Activated CD4-positive, alpha-beta T cell treated with anti-CD3 and anti-CD28 coated beads for 36 hours (primary cell): ENCODE measurements at regions of chr9 and their contacts with region 1.

Region 1: GRCh38 chr9:96854073-96854876 is at the start of gene ZNF782:
- DNase-seq: peak; percentile 92
- ATAC-seq: peak; percentile 92
- H3K4me3 Mint-ChIP-seq: peak within 1 kb of the TSS; percentile 96
- H3K27ac Mint-ChIP-seq: peak within 1 kb of the TSS; percentile 100
- H3K4me1 Mint-ChIP-seq: peaks cover 49% of the 10 kb centered on the region
- H3K27me3 Mint-ChIP-seq: peaks cover 11% of the 10 kb centered on the region
- total RNA-seq, gene ZNF782: 3.8 to 4.8 TPM

Region 2: GRCh38 chr9:96449845-96450612 is 404.2 kb before region 1 on chr9 and contains the start of gene HABP4:
- CTCF ChIA-PET with region 1: no interaction called
- POLR2A ChIA-PET with region 1: no interaction called
- intact Hi-C with region 1: loop called in 1 of 2 experiments (anchors 2 kb)
- DNase-seq: peak; percentile 98
- ATAC-seq: peak; percentile 96
- H3K4me3 Mint-ChIP-seq: peak within 1 kb of the TSS; percentile 84
- H3K27ac Mint-ChIP-seq: peak within 1 kb of the TSS; percentile 73
- H3K4me1 Mint-ChIP-seq: peaks cover 24% of the 10 kb centered on the region
- H3K27me3 Mint-ChIP-seq: peaks cover 9% of the 10 kb centered on the region
- total RNA-seq, gene HABP4: 5.8 to 7.3 TPM

Region 3: GRCh38 chr9:97062417-97062985 is 208.2 kb after region 1 on chr9:
- CTCF ChIA-PET with region 1: no interaction called
- POLR2A ChIA-PET with region 1: no interaction called
- intact Hi-C with region 1: loop called in 1 of 2 experiments (anchors 5 kb)
- DNase-seq: peak; percentile 69
- ATAC-seq: peak; percentile 88
- H3K4me3 Mint-ChIP-seq: no peak overlapping the region
- H3K27ac Mint-ChIP-seq: peak overlapping the region; percentile 42
- H3K4me1 Mint-ChIP-seq: peaks cover 13% of the 10 kb centered on the region
- H3K27me3 Mint-ChIP-seq: peaks cover 17% of the 10 kb centered on the region

Region 4: GRCh38 chr9:97096793-97097192 is 242.5 kb after region 1 on chr9:
- CTCF ChIA-PET with region 1: no interaction called
- POLR2A ChIA-PET with region 1: no interaction called
- intact Hi-C with region 1: no loop called
- DNase-seq: no peak
- ATAC-seq: no peak
- H3K4me3 Mint-ChIP-seq: no peak overlapping the region
- H3K27ac Mint-ChIP-seq: no peak overlapping the region
- H3K4me1 Mint-ChIP-seq: no peaks in the 10 kb centered on the region
- H3K27me3 Mint-ChIP-seq: peaks cover 12% of the 10 kb centered on the region

Region 5: GRCh38 chr9:97237951-97238851 is 383.9 kb after region 1 on chr9:
- CTCF ChIA-PET with region 1: interaction called, 6 read pairs
- POLR2A ChIA-PET with region 1: no interaction called
- intact Hi-C with region 1: loop called (anchors 1 to 2 kb)
- DNase-seq: peak; percentile 91
- ATAC-seq: peak; percentile 95
- H3K4me3 Mint-ChIP-seq: peak overlapping the region; percentile 93
- H3K27ac Mint-ChIP-seq: peak overlapping the region; percentile 97
- H3K4me1 Mint-ChIP-seq: peaks cover 12% of the 10 kb centered on the region
- H3K27me3 Mint-ChIP-seq: no peaks in the 10 kb centered on the region

Region 6: DNA sequence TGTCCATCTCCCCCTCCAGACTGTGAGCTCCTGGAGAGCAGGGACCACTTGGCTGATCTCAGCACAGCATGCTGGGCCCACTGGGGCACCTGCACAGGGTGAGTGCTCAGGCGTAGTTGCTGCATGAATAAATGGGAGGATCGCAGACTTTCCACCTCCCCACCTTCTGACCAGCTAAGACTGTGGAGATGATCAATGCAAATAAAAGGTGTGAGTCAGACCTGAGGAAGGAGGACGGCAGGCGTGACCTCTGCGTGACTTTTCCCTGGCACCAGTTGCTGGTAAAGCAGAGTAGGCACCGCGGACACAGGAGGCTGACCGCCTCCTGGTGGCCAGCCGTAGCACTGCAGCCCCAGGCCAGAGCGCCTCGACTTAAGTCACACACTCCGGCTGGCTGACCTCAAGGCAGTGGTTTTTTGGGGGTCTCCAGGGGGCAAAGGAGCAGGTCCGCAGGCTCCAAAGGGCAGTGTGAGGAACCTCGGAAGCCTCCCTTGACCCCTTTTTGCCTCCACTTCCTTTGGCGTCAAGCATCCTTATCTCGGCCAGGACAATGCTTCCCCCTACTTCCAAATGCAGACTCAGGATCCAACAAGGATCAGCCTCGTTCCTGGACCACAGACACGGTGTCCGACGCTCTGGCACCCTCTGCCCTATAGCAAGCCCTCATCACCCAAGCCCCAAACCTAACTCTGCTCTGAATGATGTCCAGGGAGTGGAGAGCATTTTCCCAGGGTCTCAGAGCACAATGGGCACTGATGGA is 544.9 kb after region 1 on chr9:
- CTCF ChIA-PET with region 1: interaction called, 9 read pairs
- POLR2A ChIA-PET with region 1: no interaction called
- intact Hi-C with region 1: loop called (anchors 1 to 2 kb)
- DNase-seq: peak; percentile 84
- ATAC-seq: peak; percentile 58
- H3K4me3 Mint-ChIP-seq: no peak overlapping the region
- H3K27ac Mint-ChIP-seq: no peak overlapping the region
- H3K4me1 Mint-ChIP-seq: peaks cover 16% of the 10 kb centered on the region
- H3K27me3 Mint-ChIP-seq: peaks cover 6% of the 10 kb centered on the region

Region 7: GRCh38 chr9:97598461-97599288 is 744.4 kb after region 1 on chr9:
- CTCF ChIA-PET with region 1: interaction called, 8 read pairs
- POLR2A ChIA-PET with region 1: no interaction called
- intact Hi-C with region 1: loop called (anchors 1 to 5 kb)
- DNase-seq: peak; percentile 85
- ATAC-seq: peak; percentile 99
- H3K4me3 Mint-ChIP-seq: no peak overlapping the region
- H3K27ac Mint-ChIP-seq: peak overlapping the region; percentile 66
- H3K4me1 Mint-ChIP-seq: peaks cover 7% of the 10 kb centered on the region
- H3K27me3 Mint-ChIP-seq: no peaks in the 10 kb centered on the region

Region 8: GRCh38 chr9:97696803-97697601 is 842.7 kb after region 1 on chr9 and contains the start of gene XPA:
- CTCF ChIA-PET with region 1: no interaction called
- POLR2A ChIA-PET with region 1: no interaction called
- intact Hi-C with region 1: loop called in 1 of 2 experiments (anchors 2 kb)
- DNase-seq: peak; percentile 98
- ATAC-seq: peak; percentile 95
- H3K4me3 Mint-ChIP-seq: peak within 1 kb of the TSS; percentile 81
- H3K27ac Mint-ChIP-seq: peak within 1 kb of the TSS; percentile 92
- H3K4me1 Mint-ChIP-seq: peaks cover 45% of the 10 kb centered on the region
- H3K27me3 Mint-ChIP-seq: peaks cover 2% of the 10 kb centered on the region
- total RNA-seq, gene XPA: 8.7 to 11.1 TPM